ENCODE measurements at regions of chr9 and their contacts with region 1.

Region 1: GRCh38 chr9:76302947-76303940 is 91.0 kb downstream of the RFK start:
- DNase-seq: no peak

Region 2: GRCh38 chr9:75890472-75891276 is 412.6 kb before region 1 on chr9 and contains the start of gene PCSK5:
- intact Hi-C with region 1: loop called (anchors 10 kb)
- DNase-seq: peak; percentile 96
- total RNA-seq, gene PCSK5: 6.2 TPM

Region 3: DNA sequence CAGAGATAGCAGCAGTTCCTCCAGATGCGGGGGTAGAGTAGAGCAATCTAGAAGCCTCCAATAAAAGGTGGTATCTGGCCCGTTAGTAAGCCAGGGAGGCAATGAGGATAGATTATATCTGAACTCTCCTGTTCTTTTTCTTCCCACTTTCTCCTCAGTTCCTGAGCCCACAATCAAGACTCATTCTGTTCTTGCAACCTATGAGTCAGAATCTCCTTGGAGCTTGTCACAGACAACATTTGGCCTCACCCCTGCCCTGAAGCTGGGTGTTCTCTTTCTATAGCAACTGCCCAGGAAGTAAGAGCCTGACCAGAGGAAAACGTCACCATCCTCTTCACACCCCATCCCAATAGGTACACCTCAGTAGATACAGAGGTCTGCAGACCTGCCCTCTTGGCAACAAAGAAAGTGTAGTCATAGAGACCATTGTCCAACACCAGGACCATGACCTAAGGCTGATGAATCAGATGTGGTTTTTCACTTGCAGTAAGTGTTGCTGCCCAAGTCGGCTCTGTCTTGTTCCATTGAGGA is 384.7 kb after region 1 on chr9:
- intact Hi-C with region 1: no loop called
- DNase-seq: no peak

Measured in cardiac septum (tissue), 1 donor.